Motor neuron (in vitro differentiated cells): ENCODE measurements at regions of chrX and their contacts with region 1.

Region 1: DNA sequence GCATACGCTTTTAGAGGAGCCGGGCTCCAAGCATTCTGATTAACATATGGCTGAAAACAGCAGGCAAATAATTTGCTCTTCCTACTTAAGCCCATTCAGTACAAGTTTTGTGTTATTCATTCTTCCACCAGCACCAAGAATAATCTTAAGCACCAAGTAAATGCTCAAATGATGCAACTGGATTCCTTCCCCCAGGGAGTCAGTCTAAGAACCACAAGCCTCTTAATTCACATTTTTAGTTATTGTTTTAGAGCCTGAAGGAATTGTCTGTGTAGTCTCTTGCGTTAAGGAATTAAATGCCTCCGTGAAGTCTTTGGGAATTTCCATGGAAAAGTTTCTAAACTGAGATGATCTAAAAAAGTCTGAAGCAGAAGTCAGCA is 61.5 kb upstream of the MAGEB2 start:
- ATAC-seq: no peak
- H3K4me3 ChIP-seq: no peak overlapping the region
- H3K27ac ChIP-seq: no peak overlapping the region
- H3K4me1 ChIP-seq: no peaks in the 10 kb centered on the region

Region 2: DNA sequence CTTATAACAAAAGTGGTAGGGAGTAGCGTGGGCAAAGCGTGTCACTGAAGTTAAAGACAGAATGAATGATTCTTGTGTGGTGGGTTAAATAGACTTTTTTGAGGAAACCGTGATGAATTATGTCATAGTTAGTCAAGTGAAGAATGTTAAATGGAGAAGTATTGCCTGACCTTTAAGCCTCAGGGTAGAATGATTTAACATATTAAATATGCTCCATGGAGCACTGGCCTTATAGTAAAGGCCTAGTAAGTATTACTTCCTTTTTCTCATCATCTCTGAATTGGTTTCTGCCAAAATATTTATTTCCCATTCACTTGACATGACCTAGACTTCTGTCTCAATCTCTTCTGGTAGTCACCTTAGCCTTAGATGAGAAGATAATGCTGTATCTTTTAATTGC is 116.8 kb after region 1 on chrX:
- in situ Hi-C with region 1: no loop called
- ATAC-seq: no peak
- H3K4me3 ChIP-seq: no peak overlapping the region
- H3K27ac ChIP-seq: no peak overlapping the region
- H3K4me1 ChIP-seq: no peaks in the 10 kb centered on the region

Region 3: DNA sequence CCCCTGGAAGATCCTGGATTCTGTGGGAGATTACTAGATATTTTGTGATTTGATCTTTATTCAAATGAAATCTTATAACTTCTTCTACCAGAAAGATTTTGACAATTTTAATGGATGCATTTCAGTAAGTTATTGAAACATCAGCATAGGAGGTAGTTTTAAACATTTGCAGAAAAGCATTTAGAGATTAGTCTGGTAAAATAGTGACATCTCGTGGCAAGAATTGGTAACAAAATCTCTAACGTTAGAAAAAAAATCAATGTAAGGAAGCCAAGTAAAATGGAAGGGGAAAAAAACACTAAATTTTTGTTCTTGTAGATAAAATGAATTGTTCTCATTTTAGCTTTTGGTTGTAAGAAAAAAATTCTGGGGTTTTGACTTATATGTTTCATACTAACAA is 350.4 kb after region 1 on chrX:
- in situ Hi-C with region 1: loop called in 1 of 9 experiments (anchors 25 kb)
- ATAC-seq: no peak
- H3K4me3 ChIP-seq: no peak overlapping the region
- H3K27ac ChIP-seq: no peak overlapping the region
- H3K4me1 ChIP-seq: no peaks in the 10 kb centered on the region